Heart right ventricle (tissue), 16 donors: ENCODE measurements at regions of chr9 and their contacts with region 1.

Region 1: GRCh38 chr9:38309324-38310195 is 82.9 kb upstream of the ALDH1B1 start:
- DNase-seq: no peak
- ATAC-seq: peak in 1 of 8 donors; percentile 27
- H3K4me3 ChIP-seq: no peak overlapping the region
- H3K27ac ChIP-seq: peak overlapping the region in 1 of 10 donors; percentile 9
- H3K4me1 ChIP-seq: peaks cover 0 to 32% (median 11%) of the 10 kb centered on the region in 9 donors
- H3K27me3 ChIP-seq: peaks cover 0 to 11% (median 5%) of the 10 kb centered on the region in 7 donors
- CTCF ChIP-seq: no peak

Region 2: GRCh38 chr9:38251036-38251860 is 58.3 kb before region 1 on chr9:
- intact Hi-C with region 1: loop called in 1 of 10 experiments (anchors 10 kb)
- DNase-seq: no peak
- ATAC-seq: no peak
- H3K4me3 ChIP-seq: no peak overlapping the region
- H3K27ac ChIP-seq: no peak overlapping the region
- H3K4me1 ChIP-seq: no peaks in the 10 kb centered on the region
- H3K27me3 ChIP-seq: no peaks in the 10 kb centered on the region
- CTCF ChIP-seq: no peak